ENCODE measurements at regions of chr6 and their contacts with region 1.

Region 1: DNA sequence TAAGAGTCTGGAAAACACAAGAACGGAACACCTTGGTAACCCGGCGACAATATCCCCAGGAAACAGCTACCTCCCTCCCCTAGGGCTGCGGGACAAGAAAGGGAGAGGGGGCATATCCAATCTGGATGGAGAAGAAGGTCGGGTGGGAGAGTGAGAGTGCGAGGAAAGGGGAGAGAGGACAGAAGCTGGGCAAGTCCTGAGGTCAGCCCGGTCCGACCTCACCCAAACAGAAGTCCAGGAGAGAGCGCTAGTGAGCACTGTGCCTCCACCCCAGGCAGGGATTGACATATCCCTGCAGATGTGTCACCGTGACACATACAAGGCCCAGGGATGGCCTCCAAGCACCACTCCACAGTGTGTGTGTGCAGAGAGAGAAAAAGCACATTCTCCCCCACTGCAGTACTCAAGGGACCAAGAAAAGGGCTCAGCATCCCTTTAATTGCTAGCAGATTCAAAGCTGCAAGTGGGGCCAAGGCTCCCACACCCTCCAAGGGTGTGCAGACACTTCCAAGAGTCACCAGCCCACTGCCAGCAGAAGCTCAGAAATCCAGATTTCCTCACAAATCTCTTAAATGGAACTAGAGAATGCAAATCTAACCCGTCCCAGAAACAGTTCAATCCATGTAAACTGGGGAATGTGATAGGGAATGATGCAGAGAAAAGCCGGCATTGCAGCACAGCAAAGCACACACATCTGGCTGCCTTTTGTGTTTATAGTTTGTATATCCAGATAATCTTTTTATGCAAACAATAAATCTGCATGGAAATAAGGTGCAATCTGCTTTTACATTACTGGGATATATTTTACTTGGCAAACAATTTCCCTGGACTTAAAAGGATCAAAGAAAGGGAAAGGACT is 3.1 kb downstream of the PXDC1 start:
- DNase-seq: peak; percentile 82
- ATAC-seq: peak; percentile 90
- H3K4me3 Mint-ChIP-seq: no peak overlapping the region
- H3K27ac Mint-ChIP-seq: no peak overlapping the region
- H3K4me1 Mint-ChIP-seq: peaks cover 2% of the 10 kb centered on the region
- H3K27me3 Mint-ChIP-seq: peaks cover 23% of the 10 kb centered on the region

Region 2: DNA sequence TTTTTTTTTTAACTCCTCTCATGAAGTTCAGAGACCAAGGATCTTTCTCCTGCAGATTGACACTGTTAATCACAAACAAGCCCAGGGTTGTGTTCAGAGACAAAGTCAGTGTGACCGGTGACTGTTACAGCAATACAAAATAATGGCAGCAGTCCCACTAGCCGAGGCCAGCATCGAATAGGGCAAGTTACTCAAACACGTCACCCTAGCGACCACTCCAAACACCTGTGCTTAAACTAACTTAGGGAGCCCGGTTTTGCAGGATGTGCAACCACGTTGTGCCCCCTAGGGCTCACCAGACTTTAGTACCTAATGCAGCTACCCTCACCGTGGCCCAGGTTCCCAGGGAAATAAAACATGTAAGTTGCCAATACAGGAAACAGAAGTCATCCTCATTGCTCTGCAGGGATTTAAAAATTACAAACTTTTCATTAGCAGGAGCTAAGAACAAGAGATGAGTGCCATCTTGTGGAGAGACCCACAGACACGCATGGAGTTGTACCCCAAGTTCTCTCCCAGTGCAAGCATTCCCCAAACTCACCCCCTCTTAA is 138.8 kb after region 1 on chr6:
- CTCF ChIA-PET with region 1: interaction called, 6 read pairs
- POLR2A ChIA-PET with region 1: no interaction called
- intact Hi-C with region 1: loop called (anchors 1 kb)
- DNase-seq: peak; percentile 14
- ATAC-seq: peak; percentile 23
- H3K4me3 Mint-ChIP-seq: no peak overlapping the region
- H3K27ac Mint-ChIP-seq: no peak overlapping the region
- H3K4me1 Mint-ChIP-seq: no peaks in the 10 kb centered on the region
- H3K27me3 Mint-ChIP-seq: peaks cover 2% of the 10 kb centered on the region

Region 3: DNA sequence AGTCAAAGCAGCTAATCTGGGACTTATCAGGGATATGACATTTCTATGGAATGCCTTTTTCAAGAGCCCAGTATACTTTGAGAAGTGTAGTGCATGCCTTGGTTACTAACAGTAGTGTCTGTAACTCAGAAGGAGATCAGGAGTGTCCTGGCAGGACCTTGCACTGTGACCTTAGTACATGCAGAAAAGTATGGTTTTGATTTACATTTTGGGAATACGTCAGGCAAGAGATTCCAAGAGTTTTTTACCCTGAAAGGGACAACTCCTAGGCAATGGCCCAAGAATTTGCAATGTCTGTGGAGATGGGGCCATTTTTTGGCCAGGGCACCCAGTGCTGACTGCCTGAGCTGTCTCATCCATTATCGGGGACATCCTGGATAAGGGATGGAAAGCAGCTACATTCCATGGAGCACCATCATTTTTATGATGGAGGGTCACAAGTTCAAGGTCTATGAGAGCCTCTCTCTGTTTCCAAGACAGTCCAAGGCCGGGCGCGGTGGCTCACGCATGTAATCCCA is 180.9 kb after region 1 on chr6:
- CTCF ChIA-PET with region 1: interaction called, 25 read pairs
- POLR2A ChIA-PET with region 1: no interaction called
- intact Hi-C with region 1: loop called in 1 of 2 experiments (anchors 1 kb)
- DNase-seq: no peak
- ATAC-seq: no peak
- H3K4me3 Mint-ChIP-seq: no peak overlapping the region
- H3K27ac Mint-ChIP-seq: no peak overlapping the region
- H3K4me1 Mint-ChIP-seq: no peaks in the 10 kb centered on the region
- H3K27me3 Mint-ChIP-seq: peaks cover 3% of the 10 kb centered on the region

Region 4: DNA sequence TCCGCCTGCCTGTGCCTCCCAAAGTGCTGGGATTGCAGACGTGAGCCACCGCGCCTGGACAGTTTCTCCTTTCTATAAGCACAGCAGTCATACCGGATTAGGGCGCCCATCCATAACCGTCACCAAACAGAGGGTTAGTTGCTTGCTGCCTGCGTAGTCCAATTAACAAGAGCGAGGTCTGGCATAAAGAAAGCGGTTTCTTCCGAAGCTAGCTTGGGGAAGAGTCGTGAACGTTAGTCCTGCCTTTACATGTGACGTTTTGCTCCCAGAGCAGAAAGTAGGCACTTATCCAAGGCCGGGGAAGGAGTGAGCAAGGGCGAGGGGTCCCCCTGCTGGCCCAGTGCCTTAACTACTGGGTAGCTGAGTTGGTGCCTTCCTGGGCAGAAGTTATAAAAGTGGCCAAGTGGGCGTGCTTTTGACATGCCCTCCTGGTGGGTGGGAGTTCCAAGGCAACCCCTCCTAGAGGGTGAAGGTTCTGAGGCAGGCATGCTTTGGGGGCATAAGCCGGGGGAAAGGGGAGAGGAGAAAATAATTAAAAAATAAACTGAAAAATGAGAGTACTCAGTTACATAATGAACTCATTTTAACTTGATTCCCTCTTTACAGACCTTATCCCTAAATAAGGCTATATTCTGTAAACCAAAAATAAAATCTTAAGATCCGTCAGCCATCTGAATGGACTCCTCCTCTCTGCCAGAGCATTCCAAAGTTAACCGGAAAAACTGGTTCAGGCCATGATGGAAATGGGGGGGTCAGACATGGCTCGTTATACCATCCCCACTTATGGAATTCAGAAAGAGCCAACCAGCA is 242.5 kb after region 1 on chr6:
- CTCF ChIA-PET with region 1: interaction called, 12 read pairs
- POLR2A ChIA-PET with region 1: interaction called, 3 read pairs
- intact Hi-C with region 1: loop called in 1 of 2 experiments (anchors 1 kb)
- DNase-seq: peak; percentile 86
- ATAC-seq: peak; percentile 100
- H3K4me3 Mint-ChIP-seq: no peak overlapping the region
- H3K27ac Mint-ChIP-seq: peak overlapping the region; percentile 7
- H3K4me1 Mint-ChIP-seq: peaks cover 10% of the 10 kb centered on the region
- H3K27me3 Mint-ChIP-seq: no peaks in the 10 kb centered on the region

Region 5: DNA sequence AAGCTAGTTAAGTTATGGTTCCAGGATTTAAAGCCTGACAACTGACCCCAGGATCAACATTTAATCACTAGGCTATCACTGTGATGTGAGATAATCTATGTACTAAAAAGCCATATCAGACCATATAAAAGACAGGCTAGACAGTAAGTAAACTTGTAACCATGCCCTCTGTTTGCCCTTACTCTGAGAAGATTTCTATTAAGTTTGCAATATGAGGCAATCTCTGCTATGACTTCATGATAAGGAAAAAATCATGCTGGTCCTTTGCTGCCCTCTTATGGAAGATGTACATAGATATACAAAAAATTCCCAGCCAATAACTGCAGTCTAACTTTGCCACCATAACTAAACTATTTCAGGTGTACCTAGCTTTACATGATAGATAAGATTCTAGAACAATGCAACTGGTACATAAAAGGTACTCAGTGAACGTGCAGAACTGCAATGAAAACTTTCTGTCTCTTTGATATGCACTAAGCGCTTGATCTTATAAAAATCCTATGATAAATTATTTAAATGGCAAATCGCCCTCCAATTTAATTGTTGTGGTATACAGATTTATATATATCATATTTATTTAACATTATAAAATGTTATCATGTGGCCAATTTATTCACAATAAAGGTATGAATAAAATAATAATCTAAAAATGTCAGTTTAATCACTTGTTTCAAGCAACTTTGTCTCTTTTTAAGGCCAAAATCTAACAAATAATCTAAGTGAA is 260.0 kb after region 1 on chr6:
- CTCF ChIA-PET with region 1: interaction called, 11 read pairs
- POLR2A ChIA-PET with region 1: no interaction called
- intact Hi-C with region 1: loop called in 1 of 2 experiments (anchors 1 kb)
- DNase-seq: no peak
- ATAC-seq: peak; percentile 57
- H3K4me3 Mint-ChIP-seq: no peak overlapping the region
- H3K27ac Mint-ChIP-seq: peak overlapping the region; percentile 58
- H3K4me1 Mint-ChIP-seq: peaks cover 51% of the 10 kb centered on the region
- H3K27me3 Mint-ChIP-seq: no peaks in the 10 kb centered on the region

Region 6: GRCh38 chr6:4270776-4271175 is 522.3 kb after region 1 on chr6:
- CTCF ChIA-PET with region 1: no interaction called
- POLR2A ChIA-PET with region 1: no interaction called
- intact Hi-C with region 1: no loop called
- DNase-seq: no peak
- ATAC-seq: no peak
- H3K4me3 Mint-ChIP-seq: no peak overlapping the region
- H3K27ac Mint-ChIP-seq: no peak overlapping the region
- H3K4me1 Mint-ChIP-seq: no peaks in the 10 kb centered on the region
- H3K27me3 Mint-ChIP-seq: peaks cover 9% of the 10 kb centered on the region

Measured in activated CD4-positive, alpha-beta T cell treated with anti-CD3 and anti-CD28 coated beads for 36 hours (primary cell).